ENCODE measurements at regions of chr19 and their contacts with region 1.

Region 1: DNA sequence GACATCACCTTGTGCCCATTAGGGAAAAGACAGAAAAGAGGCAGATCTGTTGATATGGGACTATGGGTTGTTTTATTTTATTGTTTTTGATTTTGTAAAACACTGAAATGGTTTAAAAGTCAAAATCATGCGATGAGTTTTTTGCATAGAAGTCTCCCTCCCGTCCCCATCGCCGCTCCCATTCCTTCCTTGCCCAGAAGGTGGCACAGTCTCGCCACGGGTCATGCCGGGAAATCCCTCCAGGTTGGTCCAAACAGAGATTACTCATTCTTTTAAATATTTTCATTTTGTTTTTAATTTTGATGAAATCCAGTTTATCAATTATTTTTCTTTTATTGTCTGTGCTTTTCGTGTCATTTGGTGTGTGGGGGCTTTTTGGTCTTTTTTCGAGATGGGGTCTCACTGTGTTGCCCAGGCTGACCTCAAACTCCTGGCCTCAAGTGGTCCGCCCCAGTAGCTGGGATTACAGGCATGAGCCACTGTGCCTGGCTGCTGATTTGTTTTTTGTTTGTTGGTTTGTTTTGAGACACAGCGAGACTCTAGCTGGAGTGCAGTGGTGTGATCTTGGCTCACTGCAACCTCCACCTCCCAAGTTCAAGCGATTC is 9.2 kb downstream of the PGPEP1 start:
- DNase-seq: peak in 1 of 2 experiments; percentile 75
- H3K4me3 ChIP-seq: no peak overlapping the region
- H3K27ac ChIP-seq: no peak overlapping the region
- H3K4me1 ChIP-seq: peaks cover 0 to 3% (median 2%) of the 10 kb centered on the region in 4 experiments; a peak in 4 of 7 replicates
- H3K27me3 ChIP-seq: no peaks in the 10 kb centered on the region
- CTCF ChIP-seq: peak; percentile 76 to 87 (median 84)
- EP300 ChIP-seq: no peak
- POLR2A ChIP-seq: no peak
- RAD21 ChIP-seq: peak; percentile 89 to 91

Region 2: DNA sequence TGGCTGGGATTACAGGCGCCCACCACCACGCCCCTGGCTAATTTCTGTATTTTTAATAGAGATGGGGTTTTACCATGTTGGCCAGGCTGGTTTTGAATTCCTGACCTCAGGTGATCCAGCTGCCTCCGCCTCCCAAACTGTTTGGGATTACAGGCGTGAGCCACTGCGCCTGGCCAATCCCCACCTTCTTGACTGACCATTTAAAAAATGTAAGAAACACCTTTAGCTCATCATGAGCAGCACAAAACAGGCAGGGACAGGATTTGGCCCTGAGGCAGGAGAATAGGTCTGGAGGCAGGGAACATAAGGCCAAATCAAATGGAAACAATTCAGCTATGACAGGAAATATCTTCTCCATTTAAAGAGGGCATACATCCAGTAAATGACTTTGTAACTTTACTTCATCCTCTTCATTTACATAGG is 158.0 kb before region 1 on chr19:
- CTCF ChIA-PET with region 1: no interaction called
- POLR2A ChIA-PET with region 1: no interaction called
- DNase-seq: no peak
- H3K4me3 ChIP-seq: no peak overlapping the region
- H3K27ac ChIP-seq: no peak overlapping the region
- H3K4me1 ChIP-seq: peaks cover 5 to 12% (median 8%) of the 10 kb centered on the region in 4 experiments
- H3K27me3 ChIP-seq: no peaks in the 10 kb centered on the region
- CTCF ChIP-seq: no peak
- EP300 ChIP-seq: no peak
- POLR2A ChIP-seq: no peak
- RAD21 ChIP-seq: no peak

Region 3: DNA sequence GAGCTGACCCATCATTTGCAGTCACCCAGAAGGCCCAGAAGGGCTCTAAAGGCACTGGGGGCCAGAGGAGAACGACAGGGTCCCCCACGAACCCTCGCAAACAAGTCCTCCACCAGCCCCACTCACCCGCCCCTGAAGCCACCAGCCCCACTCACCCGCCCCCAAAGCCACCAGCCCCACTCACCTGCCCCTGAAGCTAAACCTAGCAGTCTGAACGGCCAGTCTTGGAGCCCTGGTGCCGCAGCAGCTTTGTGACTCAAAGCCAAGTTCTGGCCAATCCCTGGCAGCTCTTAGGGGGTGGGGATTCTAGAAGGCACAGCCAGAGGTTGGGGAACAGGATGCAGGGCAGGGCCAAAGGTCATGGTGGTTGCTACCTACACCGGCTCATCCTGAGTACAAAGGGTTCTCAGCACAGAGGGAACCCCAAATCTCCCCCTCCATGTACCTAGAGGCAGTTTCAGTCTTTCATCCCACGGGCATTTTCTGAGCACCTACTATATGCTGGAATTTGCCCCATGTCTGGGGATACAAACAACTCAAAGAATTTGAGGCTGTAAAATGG is 75.3 kb before region 1 on chr19 and contains the start of gene IQCN:
- CTCF ChIA-PET with region 1: interaction called, 14 read pairs
- POLR2A ChIA-PET with region 1: interaction called, 224 read pairs
- DNase-seq: no peak
- H3K4me3 ChIP-seq: no peak within 1 kb of the TSS
- H3K27ac ChIP-seq: no peak within 1 kb of the TSS
- H3K4me1 ChIP-seq: peaks cover 0 to 9% (median 8%) of the 10 kb centered on the region in 4 experiments; a peak in 6 of 7 replicates
- H3K27me3 ChIP-seq: no peaks in the 10 kb centered on the region
- CTCF ChIP-seq: no peak
- EP300 ChIP-seq: no peak
- POLR2A ChIP-seq: no peak
- RAD21 ChIP-seq: no peak
- total RNA-seq, gene IQCN: 0.31 and 1.0 TPM in 2 replicates

Region 4: DNA sequence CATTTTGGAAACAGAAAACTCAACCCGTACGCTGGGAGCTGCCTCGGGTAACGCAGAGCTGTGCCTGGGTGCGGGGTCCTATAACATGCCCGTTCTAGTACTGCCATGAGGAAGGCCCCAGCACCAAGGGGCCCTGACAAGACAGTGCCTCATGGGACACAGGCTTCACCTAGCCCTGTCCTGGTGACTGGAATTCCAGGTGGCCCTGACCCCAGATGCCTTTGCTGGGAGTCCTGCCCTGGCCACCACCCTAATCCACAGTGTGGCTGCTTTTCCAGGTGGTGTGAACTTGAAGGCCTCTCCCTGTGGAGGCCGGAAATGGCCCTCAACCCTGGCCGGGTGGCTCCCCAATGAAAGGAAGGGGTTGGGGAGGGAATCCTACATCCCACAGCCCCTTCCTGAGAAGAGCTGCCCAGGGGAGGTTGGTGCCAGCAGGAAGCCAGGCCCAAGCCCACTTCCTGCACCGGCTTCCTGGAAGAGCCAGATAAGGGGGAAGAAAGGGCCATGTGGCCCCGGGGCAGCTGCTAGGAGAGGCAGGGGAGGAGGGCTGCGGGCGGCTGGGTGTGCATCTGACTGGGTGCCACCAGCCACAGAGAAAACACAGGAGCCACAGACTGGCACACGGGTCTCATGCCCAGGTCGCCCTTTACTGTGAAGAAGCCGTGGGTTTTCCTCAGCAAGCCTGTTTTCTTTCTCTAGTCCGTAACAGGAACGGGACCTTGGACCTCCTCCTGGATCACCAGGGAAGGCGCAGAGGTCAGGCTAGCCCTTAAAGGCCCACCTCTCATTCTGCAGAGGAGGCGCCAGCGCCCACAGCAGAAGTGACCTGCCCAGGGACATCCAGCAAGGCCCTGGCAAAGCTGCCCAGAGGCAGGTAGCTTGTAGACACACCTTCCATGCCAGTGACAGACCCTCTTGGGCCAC is 31.4 kb before region 1 on chr19:
- CTCF ChIA-PET with region 1: no interaction called
- POLR2A ChIA-PET with region 1: no interaction called
- DNase-seq: no peak
- H3K4me3 ChIP-seq: no peak overlapping the region
- H3K27ac ChIP-seq: no peak overlapping the region
- H3K4me1 ChIP-seq: peaks cover 2 to 7% (median 4%) of the 10 kb centered on the region in 4 experiments
- H3K27me3 ChIP-seq: no peaks in the 10 kb centered on the region
- CTCF ChIP-seq: no peak
- EP300 ChIP-seq: no peak
- POLR2A ChIP-seq: no peak; a peak in 1 of 3 replicates
- RAD21 ChIP-seq: no peak

Region 5: DNA sequence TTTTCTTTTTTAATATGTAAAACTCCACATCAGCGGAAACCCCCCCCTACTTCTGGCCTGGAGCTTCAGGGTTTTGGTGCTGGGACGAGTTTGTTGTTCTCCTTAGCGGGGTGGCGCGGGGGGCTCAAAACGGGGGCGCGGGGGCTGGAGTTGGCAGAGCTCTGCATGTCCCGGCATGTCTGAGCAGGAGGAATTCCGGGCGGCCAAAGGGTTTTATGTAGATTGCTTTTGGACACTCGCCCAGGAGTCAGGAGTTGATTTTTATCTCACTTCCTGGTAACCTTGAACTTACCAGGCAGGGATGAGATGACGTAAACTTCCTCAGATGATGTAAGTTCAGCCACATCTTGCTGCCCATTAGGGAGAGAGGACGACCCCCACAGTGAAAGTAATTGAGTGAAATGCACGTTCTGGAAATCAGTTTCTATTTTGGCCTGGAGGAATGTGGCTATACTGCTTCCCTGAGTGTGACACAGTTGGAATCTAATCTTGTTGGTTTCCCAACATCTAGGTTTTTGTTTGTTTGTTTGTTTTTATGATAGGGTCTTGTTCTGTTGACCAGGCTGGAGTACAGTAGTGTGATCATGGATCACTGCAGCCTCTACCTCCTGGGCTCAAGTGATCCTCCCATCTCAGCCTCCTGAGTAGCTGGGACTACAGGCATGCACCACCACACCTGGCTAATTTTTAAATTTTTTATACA is 15.4 kb after region 1 on chr19:
- CTCF ChIA-PET with region 1: interaction called, 34 read pairs
- POLR2A ChIA-PET with region 1: interaction called, 4 read pairs
- DNase-seq: no peak
- H3K4me3 ChIP-seq: no peak overlapping the region
- H3K27ac ChIP-seq: peak overlapping the region; percentile 87; the same call in 1 of the 2 replicates
- H3K4me1 ChIP-seq: peaks cover 1 to 14% (median 8%) of the 10 kb centered on the region in 4 experiments; a peak in 5 of 7 replicates
- H3K27me3 ChIP-seq: no peaks in the 10 kb centered on the region
- CTCF ChIP-seq: no peak
- EP300 ChIP-seq: 0 out of 3 replicates have a peak, but pooled peaks of 1 of the 2 experiments have one; percentile 14
- POLR2A ChIP-seq: no peak
- RAD21 ChIP-seq: no peak

Region 6: DNA sequence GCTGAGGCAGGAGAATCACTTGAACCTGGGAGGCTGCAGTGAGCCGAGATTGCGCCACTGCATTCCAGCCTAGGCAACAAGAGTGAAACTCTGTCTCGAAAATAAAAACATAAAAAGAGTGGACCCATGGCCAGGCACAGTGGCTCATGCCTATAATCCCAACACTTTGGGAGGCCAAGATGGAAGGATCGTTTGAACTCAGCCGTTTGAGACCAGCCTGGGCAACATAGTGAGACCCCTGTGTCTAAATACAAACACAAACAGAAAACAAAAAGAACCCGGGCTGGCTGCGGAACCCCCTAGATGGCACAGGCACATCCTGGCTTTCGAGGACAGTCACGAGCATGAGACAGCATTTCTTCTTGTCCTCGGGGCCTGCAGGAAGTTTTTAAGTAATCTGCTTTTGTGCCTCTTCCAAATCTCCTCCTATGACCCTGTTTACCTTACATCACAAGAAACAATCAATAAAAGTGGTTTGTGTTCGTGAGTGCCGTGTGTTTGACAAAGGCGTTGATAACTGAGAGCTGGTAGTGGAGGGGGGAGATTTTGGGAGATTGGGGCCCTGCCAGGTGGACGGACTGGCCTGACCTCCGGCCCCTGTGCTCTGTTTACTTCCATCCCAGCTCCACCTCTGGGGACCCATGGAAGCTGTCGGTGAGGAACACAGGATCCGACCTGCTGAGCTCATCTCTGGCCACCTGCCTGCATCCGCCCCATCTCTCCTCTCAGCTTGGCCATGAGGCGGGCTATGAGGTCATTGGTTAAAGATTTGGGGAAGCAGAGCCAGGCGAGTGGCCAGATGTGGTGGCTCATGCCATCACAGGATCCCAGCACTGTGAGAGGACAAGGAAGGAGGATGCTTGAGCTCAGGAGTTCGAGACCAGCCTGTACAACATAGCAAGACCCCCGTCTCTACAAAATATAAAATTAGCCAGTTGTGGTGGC is 30.4 kb after region 1 on chr19:
- CTCF ChIA-PET with region 1: interaction called, 17 read pairs
- POLR2A ChIA-PET with region 1: interaction called, 5 read pairs
- DNase-seq: no peak
- H3K4me3 ChIP-seq: no peak overlapping the region
- H3K27ac ChIP-seq: no peak overlapping the region
- H3K4me1 ChIP-seq: peaks cover 0 to 3% (median 1%) of the 10 kb centered on the region in 4 experiments; a peak in 1 of 7 replicates
- H3K27me3 ChIP-seq: no peaks in the 10 kb centered on the region
- CTCF ChIP-seq: no peak
- EP300 ChIP-seq: no peak
- POLR2A ChIP-seq: no peak
- RAD21 ChIP-seq: no peak

Region 7: DNA sequence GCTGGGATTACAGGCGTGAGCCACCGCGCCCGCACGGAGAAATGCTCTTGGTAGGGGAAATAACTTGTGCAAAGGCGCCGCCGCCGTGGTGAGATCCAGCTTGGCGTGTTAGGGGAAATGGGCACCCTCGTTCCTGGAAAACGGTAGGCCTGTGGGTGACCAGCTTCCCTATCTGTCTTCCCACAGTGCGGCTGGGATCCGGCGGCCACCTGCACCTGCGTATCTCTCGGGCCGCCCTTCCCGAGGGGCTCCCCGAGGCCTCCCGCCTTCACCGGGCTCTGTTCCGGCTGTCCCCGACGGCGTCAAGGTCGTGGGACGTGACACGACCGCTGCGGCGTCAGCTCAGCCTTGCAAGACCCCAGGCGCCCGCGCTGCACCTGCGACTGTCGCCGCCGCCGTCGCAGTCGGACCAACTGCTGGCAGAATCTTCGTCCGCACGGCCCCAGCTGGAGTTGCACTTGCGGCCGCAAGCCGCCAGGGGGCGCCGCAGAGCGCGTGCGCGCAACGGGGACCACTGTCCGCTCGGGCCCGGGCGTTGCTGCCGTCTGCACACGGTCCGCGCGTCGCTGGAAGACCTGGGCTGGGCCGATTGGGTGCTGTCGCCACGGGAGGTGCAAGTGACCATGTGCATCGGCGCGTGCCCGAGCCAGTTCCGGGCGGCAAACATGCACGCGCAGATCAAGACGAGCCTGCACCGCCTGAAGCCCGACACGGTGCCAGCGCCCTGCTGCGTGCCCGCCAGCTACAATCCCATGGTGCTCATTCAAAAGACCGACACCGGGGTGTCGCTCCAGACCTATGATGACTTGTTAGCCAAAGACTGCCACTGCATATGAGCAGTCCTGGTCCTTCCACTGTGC is 38.7 kb after region 1 on chr19:
- CTCF ChIA-PET with region 1: interaction called, 69 read pairs
- POLR2A ChIA-PET with region 1: no interaction called
- DNase-seq: peak in 1 of 2 experiments; percentile 98
- H3K4me3 ChIP-seq: peak overlapping the region in 3 of 4 experiments; percentile 17 to 46 (median 20); a peak in 5 of 8 replicates
- H3K27ac ChIP-seq: no peak overlapping the region
- H3K4me1 ChIP-seq: peaks cover 3 to 4% (median 3%) of the 10 kb centered on the region in 4 experiments
- H3K27me3 ChIP-seq: peaks cover 0 to 23% (median 14%) of the 10 kb centered on the region in 4 experiments; a peak in 6 of 7 replicates
- CTCF ChIP-seq: peak; percentile 97 to 99 (median 98)
- EP300 ChIP-seq: no peak
- POLR2A ChIP-seq: no peak
- RAD21 ChIP-seq: peak; percentile 52 to 73; a peak in 3 of 4 replicates

Region 8: DNA sequence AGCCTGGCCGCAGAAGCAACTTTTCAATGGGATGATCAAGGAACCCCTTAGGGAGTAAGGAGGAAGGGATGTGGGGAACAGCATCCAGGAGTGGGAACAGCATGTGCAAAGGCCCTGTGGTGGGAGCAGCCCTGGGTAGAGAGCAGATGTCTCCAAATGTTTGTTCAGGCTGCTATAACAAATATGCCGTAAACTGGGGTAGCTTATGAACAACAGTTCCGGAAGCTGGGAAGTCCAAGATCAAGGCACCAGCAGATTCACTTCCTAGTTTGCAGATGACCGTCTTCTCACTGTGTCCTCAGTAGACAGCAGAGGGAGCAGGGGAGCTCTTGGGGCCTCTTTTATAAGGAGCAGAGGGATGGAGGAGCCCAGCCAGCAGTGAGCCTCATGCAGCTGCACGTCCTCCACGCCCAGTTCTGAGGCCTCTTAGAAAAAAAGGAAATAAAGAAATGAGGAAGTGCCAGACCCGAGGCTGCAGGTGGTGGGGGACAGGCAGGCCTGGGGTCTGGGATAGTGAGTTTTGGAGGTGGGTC is 52.0 kb after region 1 on chr19:
- CTCF ChIA-PET with region 1: interaction called, 18 read pairs
- POLR2A ChIA-PET with region 1: interaction called, 3 read pairs
- DNase-seq: no peak
- H3K4me3 ChIP-seq: no peak overlapping the region
- H3K27ac ChIP-seq: no peak overlapping the region
- H3K4me1 ChIP-seq: peaks cover 0 to 8% (median 3%) of the 10 kb centered on the region in 4 experiments; a peak in 5 of 7 replicates
- H3K27me3 ChIP-seq: peaks cover 0 to 3% (median under 1%) of the 10 kb centered on the region in 4 experiments; a peak in 3 of 7 replicates
- CTCF ChIP-seq: peak; percentile 41 to 62 (median 48)
- EP300 ChIP-seq: no peak
- POLR2A ChIP-seq: no peak
- RAD21 ChIP-seq: peak; percentile 34 to 45; a peak in 3 of 4 replicates

Region 9: DNA sequence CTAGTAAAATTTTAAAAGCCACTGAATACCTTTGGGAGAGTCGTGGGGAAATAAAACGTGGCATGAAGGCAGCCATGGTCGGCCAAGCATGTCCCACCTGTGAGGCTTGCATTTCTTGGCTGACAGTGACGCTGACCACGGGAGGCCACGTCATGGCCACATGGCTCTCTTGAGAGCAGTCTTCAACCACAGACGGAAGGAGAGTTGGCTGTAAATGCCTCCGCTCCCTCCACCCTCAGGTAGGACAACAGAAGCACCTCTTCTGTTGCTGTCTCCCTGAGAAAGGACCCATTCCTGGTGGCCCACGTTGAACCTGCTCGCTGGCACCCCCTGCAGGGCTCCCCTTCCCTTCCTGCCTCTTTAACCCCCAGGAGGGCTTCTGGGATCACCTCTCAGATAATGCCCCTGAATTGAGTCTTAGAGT is 58.4 kb after region 1 on chr19:
- CTCF ChIA-PET with region 1: interaction called, 132 read pairs
- POLR2A ChIA-PET with region 1: interaction called, 4 read pairs
- DNase-seq: peak in 1 of 2 experiments; percentile 86
- H3K4me3 ChIP-seq: no peak overlapping the region
- H3K27ac ChIP-seq: no peak overlapping the region
- H3K4me1 ChIP-seq: no peaks in the 10 kb centered on the region
- H3K27me3 ChIP-seq: no peaks in the 10 kb centered on the region
- CTCF ChIP-seq: peak; percentile 63 to 82 (median 72)
- EP300 ChIP-seq: no peak
- POLR2A ChIP-seq: no peak
- RAD21 ChIP-seq: peak; percentile 62 to 69

Measured in H1 (cell line).